PC-9 (cell line): ENCODE measurements at regions of chr20 and their contacts with region 1.

Region 1: GRCh38 chr20:23125625-23126191 is 39.6 kb upstream of the CD93 start:
- DNase-seq: no peak
- H3K4me3 ChIP-seq: no peak overlapping the region
- H3K27ac ChIP-seq: no peak overlapping the region
- H3K4me1 ChIP-seq: peaks cover 19% of the 10 kb centered on the region; the same call in 1 of the 2 replicates
- H3K27me3 ChIP-seq: no peaks in the 10 kb centered on the region
- CTCF ChIP-seq: no peak

Region 2: DNA sequence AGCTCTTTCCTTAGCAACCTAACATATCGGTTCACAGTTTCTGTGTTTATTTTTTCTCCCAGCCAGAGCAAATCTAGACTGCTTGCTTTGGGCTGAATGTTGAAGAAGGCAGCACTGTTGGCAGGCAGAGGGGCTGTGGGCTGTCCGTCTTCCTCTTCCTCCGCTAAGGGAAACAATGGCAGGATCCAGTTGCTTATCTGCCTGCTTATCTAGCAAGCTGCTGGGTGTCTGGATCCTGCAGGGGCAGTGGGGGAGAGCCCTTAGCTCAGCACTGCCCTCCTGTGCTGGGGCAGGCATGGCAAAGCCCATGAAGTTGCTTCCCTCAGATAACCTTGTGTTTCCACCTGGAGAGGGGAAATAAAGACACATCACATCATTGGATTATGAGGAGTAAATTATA is 53.1 kb after region 1 on chr20:
- CTCF ChIA-PET with region 1: no interaction called
- POLR2A ChIA-PET with region 1: no interaction called
- intact Hi-C with region 1: loop called (anchors 10 kb)
- DNase-seq: no peak
- H3K4me3 ChIP-seq: no peak overlapping the region
- H3K27ac ChIP-seq: no peak overlapping the region
- H3K4me1 ChIP-seq: no peaks in the 10 kb centered on the region
- H3K27me3 ChIP-seq: no peaks in the 10 kb centered on the region
- CTCF ChIP-seq: 0 out of 2 replicates have a peak, but pooled peaks have one; percentile 30

Region 3: GRCh38 chr20:23214903-23215302 is 89.2 kb after region 1 on chr20:
- CTCF ChIA-PET with region 1: no interaction called
- POLR2A ChIA-PET with region 1: no interaction called
- intact Hi-C with region 1: no loop called
- DNase-seq: no peak
- H3K4me3 ChIP-seq: no peak overlapping the region
- H3K27ac ChIP-seq: no peak overlapping the region
- H3K4me1 ChIP-seq: peaks cover 18% of the 10 kb centered on the region
- H3K27me3 ChIP-seq: no peaks in the 10 kb centered on the region
- CTCF ChIP-seq: no peak